ENCODE measurements at regions of chr5 and their contacts with region 1.

Region 1: GRCh38 chr5:55372130-55372925 is 64.5 kb downstream of the MTREX start:
- DNase-seq: no peak
- H3K4me3 ChIP-seq: no peak overlapping the region
- H3K27me3 ChIP-seq: no peaks in the 10 kb centered on the region
- CTCF ChIP-seq: no peak

Region 2: DNA sequence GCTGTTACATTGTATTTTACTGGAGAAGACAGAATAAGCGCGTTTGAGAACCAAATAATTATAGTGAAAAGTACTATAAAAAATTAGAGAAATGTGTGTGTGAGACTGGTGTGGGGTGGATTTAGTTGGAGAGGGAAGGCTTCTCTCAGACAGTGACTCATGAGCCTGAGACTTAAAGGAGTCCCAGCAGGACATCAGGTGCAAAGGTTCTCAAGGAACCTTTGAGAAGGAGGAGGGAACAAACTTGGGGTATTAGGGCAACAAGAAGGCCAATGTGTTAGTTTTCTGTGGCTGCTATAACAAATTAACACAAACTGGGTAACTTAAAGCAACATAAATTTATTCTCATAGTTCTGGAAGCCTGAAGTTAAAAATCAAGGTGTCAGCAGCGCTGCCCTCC is 370.4 kb after region 1 on chr5:
- CTCF ChIA-PET with region 1: no interaction called
- POLR2A ChIA-PET with region 1: interaction called, 13 read pairs
- DNase-seq: no peak
- H3K4me3 ChIP-seq: no peak overlapping the region
- H3K27me3 ChIP-seq: peaks cover 5% of the 10 kb centered on the region; the same call in 1 of the 2 replicates
- CTCF ChIP-seq: no peak

Measured in BJ (cell line).